Activated CD4-positive, alpha-beta T cell treated with anti-CD3 and anti-CD28 coated beads for 36 hours (primary cell): ENCODE measurements at regions of chr9 and their contacts with region 1.

Region 1: DNA sequence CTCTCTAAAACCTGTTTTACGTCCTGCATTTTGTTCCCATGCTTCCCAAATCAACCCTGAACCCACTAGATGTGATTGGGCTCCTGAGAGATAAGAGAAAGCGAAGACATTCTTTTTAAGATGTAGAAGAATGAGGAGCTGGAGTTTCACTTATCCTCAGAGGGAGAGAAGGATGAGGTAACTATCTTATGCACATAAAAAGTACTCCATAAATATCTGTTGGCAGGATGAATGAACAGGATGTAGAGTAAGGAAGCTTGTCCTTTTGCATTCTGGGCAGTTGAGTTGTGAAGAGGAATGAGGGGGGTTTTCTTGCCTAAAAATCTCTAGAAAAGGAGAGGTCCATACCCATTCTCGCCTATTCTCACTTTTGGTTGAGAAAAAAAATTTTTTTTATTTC is 163.2 kb downstream of the UNC13B start:
- DNase-seq: no peak
- ATAC-seq: no peak
- H3K4me3 Mint-ChIP-seq: no peak overlapping the region
- H3K27ac Mint-ChIP-seq: no peak overlapping the region
- H3K4me1 Mint-ChIP-seq: peaks cover 3% of the 10 kb centered on the region
- H3K27me3 Mint-ChIP-seq: peaks cover 5% of the 10 kb centered on the region

Region 2: GRCh38 chr9:34957492-34958410 is 367.2 kb before region 1 on chr9 and contains the start of gene PHF24:
- CTCF ChIA-PET with region 1: no interaction called
- POLR2A ChIA-PET with region 1: no interaction called
- intact Hi-C with region 1: no loop called
- DNase-seq: peak; percentile 46
- ATAC-seq: peak; percentile 49
- H3K4me3 Mint-ChIP-seq: peak within 1 kb of the TSS; percentile 32
- H3K27ac Mint-ChIP-seq: no peak within 1 kb of the TSS
- H3K4me1 Mint-ChIP-seq: peaks cover 24% of the 10 kb centered on the region
- H3K27me3 Mint-ChIP-seq: peaks cover 51% of the 10 kb centered on the region
- total RNA-seq, gene PHF24: 0.09 to 0.18 TPM

Region 3: GRCh38 chr9:35470894-35471293 is 145.9 kb after region 1 on chr9:
- CTCF ChIA-PET with region 1: no interaction called
- POLR2A ChIA-PET with region 1: no interaction called
- intact Hi-C with region 1: loop called in 1 of 2 experiments (anchors 5 kb)
- DNase-seq: no peak
- ATAC-seq: no peak
- H3K4me3 Mint-ChIP-seq: no peak overlapping the region
- H3K27ac Mint-ChIP-seq: no peak overlapping the region
- H3K4me1 Mint-ChIP-seq: no peaks in the 10 kb centered on the region
- H3K27me3 Mint-ChIP-seq: peaks cover 23% of the 10 kb centered on the region